ENCODE measurements at regions of chr20 and their contacts with region 1.

Region 1: DNA sequence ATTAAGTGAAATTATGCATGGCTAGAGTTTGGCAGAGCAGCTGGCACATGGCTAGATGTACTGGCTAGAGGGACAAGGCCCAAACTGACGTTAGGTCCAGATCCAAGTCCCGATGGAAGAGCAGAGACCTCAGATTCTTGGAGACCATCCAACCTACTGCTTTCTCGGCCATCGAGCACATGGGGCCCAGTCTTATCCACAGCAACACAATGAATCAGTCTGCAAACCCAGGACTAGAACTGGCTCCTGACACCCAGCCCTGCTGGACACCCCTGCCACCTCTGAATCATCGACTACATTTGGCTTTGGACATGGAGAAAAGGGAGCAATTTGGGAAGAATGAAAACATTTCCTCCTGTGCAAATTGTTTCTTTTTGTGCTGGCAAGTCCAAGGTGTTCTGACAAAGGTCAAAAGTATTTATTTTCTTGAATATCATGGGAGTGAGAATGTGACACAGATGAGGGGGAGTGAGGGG is 23.9 kb upstream of the YWHAB start:
- DNase-seq: no peak
- H3K4me3 Mint-ChIP-seq: no peak overlapping the region
- H3K27ac Mint-ChIP-seq: no peak overlapping the region
- H3K4me1 Mint-ChIP-seq: peaks cover 5% of the 10 kb centered on the region
- H3K27me3 Mint-ChIP-seq: peaks cover 13% of the 10 kb centered on the region

Region 2: DNA sequence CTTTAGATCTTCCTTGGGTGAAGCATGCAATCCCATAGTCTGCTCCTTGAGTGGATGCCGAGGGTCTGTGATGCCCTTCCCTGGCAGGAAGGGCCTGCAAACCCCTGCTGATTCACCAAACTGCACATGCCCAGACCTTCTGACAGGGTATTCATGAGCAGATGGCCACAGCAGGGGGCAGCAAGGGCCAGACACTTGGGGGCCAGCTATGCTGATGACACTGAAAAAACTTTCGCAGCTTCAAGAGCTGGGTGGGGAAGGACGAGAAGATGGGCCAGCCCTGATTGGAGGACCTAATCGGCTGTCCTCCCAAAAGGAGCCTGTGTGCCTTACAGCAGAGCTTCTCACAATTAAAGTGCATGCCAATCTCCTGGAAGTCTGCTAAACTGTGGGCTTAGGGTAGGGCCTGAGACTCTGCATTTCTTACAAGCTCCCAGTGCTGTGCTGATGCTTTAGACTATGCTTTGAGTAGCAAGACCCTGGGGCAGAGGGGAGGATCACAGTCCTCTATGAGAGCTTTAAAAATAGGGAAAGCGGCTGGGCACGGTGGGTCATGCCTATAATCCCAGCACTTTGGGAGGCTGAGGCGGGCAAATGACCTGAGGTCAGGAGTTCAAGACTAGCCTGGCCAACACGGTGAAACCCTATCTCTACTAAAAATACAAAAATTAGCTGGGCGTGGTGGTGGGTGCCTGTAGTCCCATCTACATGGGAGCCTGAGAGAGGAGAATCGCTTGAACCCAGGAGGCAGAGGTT is 629.7 kb before region 1 on chr20:
- intact Hi-C with region 1: loop called (anchors 10 kb)
- DNase-seq: no peak
- H3K4me3 Mint-ChIP-seq: no peak overlapping the region
- H3K27ac Mint-ChIP-seq: no peak overlapping the region
- H3K4me1 Mint-ChIP-seq: no peaks in the 10 kb centered on the region
- H3K27me3 Mint-ChIP-seq: no peaks in the 10 kb centered on the region